Breast epithelium (tissue), 4 donors: ENCODE measurements at regions of chr11 and their contacts with region 1.

Region 1: GRCh38 chr11:60788401-60789125 is 3.4 kb downstream of the MS4A10 start:
- DNase-seq: no peak
- H3K4me3 ChIP-seq: no peak overlapping the region
- H3K27ac ChIP-seq: no peak overlapping the region
- H3K4me1 ChIP-seq: no peaks in the 10 kb centered on the region
- H3K27me3 ChIP-seq: no peaks in the 10 kb centered on the region
- CTCF ChIP-seq: no peak
- POLR2A ChIP-seq: no peak

Region 2: DNA sequence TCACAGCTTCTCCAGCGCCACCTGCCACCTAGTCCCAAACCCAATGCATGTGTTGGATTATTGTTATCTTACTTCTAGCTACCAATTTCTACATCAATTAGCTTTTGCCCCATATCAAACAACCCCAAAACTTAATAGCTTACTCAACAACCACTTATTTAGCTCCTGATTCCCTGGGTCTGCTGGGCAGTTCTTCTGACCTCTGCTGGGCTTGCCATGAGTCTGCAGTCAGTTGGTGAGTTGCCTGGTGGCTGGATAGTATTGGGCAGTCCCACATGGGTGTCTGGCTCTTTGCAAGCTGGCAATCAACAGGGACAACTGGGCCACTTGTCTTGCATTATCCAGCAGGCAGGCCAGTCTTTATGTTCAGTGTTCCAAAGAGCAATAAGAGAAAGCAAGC is 45.5 kb before region 1 on chr11:
- intact Hi-C with region 1: no loop called
- DNase-seq: no peak
- H3K4me3 ChIP-seq: no peak overlapping the region
- H3K27ac ChIP-seq: no peak overlapping the region
- H3K4me1 ChIP-seq: no peaks in the 10 kb centered on the region
- H3K27me3 ChIP-seq: peaks cover 0 to 5% of the 10 kb centered on the region in 2 donors
- CTCF ChIP-seq: no peak
- POLR2A ChIP-seq: no peak

Region 3: DNA sequence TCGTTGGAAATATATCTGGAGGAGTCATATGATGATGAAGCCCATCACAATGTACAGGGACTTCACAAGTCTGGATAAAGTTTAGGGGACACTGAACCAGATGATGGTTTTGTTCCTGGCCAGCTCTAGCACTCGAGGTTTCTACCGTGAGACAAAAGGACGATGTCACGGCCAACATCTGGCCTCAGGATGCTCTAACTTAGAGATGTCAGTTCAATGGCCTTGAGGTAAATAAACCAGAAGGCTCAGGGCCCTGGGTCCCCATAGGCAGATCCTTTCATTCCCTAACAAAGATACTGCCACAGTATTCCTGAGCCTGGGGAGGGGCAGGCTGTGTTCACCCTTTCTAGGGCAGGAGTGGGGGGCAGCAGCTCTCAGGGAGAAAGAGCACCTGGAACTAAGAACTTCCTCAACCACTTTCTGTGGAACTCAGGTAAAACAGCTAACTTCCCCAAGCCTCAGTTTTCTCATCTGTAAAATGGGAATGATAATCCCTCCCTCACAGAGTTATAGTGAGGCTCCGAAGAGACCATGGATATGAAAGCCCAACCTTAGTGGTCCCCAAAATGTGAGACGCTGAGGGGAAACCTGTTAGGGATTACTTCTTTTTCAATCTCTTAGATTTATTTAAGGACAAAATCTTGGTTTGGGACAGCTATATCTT is 14.8 kb after region 1 on chr11:
- intact Hi-C with region 1: loop called (anchors 1 kb)
- DNase-seq: no peak
- H3K4me3 ChIP-seq: no peak overlapping the region
- H3K27ac ChIP-seq: no peak overlapping the region
- H3K4me1 ChIP-seq: no peaks in the 10 kb centered on the region
- H3K27me3 ChIP-seq: no peaks in the 10 kb centered on the region
- CTCF ChIP-seq: no peak
- POLR2A ChIP-seq: no peak

Region 4: GRCh38 chr11:60924110-60924905 is 135.7 kb after region 1 on chr11 and contains the start of gene TMEM132A:
- intact Hi-C with region 1: no loop called
- DNase-seq: peak in 1 of 2 donors; percentile 70
- H3K4me3 ChIP-seq: peak within 1 kb of the TSS; percentile 48 to 79 (median 72)
- H3K27ac ChIP-seq: no peak within 1 kb of the TSS
- H3K4me1 ChIP-seq: no peaks in the 10 kb centered on the region
- H3K27me3 ChIP-seq: no peaks in the 10 kb centered on the region
- CTCF ChIP-seq: no peak
- POLR2A ChIP-seq: no peak
- total RNA-seq, gene TMEM132A: 2.9 to 11.0 (median 8.5) TPM